Left lung (tissue), 14 donors: ENCODE measurements at regions of chr17 and their contacts with region 1.

Region 1: GRCh38 chr17:73429440-73430164 is 117.8 kb upstream of the CDC42EP4 start:
- DNase-seq: peak; percentile 79 to 97 (median 90)
- ATAC-seq: peak; percentile 98
- H3K4me3 ChIP-seq: no peak overlapping the region
- H3K27ac ChIP-seq: no peak overlapping the region
- H3K4me1 ChIP-seq: peaks cover 5 to 22% of the 10 kb centered on the region in 2 donors
- H3K27me3 ChIP-seq: peaks cover 0 to 10% of the 10 kb centered on the region in 2 donors
- CTCF ChIP-seq: peak; percentile 92 to 93

Region 2: DNA sequence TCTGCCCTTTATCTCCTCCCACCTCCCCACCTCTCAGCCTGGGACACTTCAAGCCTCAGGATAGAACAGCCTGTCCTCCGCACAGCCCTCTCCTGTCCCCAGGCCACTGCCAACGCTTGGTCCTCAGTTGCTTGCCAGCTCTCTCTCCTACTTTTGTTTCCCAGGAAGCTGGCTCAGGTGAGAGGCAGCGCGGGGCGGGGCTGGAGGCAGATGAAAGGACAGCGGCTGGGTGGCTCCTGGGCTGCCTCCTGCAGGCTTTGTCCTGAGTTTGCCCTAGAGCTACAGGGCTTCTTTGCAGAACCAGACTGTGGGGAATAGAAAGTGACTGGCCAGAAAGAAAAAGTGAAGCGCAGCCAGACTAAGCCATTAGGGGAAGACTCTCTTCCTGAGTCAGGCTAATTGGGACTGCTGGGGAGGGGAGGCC is 69.6 kb before region 1 on chr17:
- intact Hi-C with region 1: no loop called
- DNase-seq: peak in 3 of 4 donors; percentile 55 to 87 (median 76)
- ATAC-seq: peak; percentile 93
- H3K4me3 ChIP-seq: no peak overlapping the region
- H3K27ac ChIP-seq: no peak overlapping the region
- H3K4me1 ChIP-seq: peaks cover 0 to 4% of the 10 kb centered on the region in 2 donors
- H3K27me3 ChIP-seq: no peaks in the 10 kb centered on the region
- CTCF ChIP-seq: no peak

Region 3: GRCh38 chr17:73705594-73705993 is 276.0 kb after region 1 on chr17:
- intact Hi-C with region 1: loop called in 1 of 2 experiments (anchors 5 kb)
- DNase-seq: peak in 2 of 4 donors; percentile 31 to 55
- ATAC-seq: peak; percentile 71
- H3K4me3 ChIP-seq: no peak overlapping the region
- H3K27ac ChIP-seq: no peak overlapping the region
- H3K4me1 ChIP-seq: peaks cover 0 to 6% of the 10 kb centered on the region in 2 donors
- H3K27me3 ChIP-seq: peaks cover 0 to 34% of the 10 kb centered on the region in 2 donors
- CTCF ChIP-seq: no peak